HepG2 (cell line): ENCODE measurements at regions of chr16 and their contacts with region 1.

Region 1: GRCh38 chr16:27154705-27155521 is 48.4 kb upstream of the KDM8 start:
- DNase-seq: peak; percentile 52
- ATAC-seq: peak; percentile 89
- H3K4me3 ChIP-seq: peak overlapping the region in 1 of 3 experiments; percentile 45; a peak in 2 of 6 replicates
- H3K27ac ChIP-seq: no peak overlapping the region
- H3K4me1 ChIP-seq: peaks cover 11% of the 10 kb centered on the region
- H3K27me3 ChIP-seq: no peaks in the 10 kb centered on the region; a peak in 1 of 5 replicates
- CTCF ChIP-seq: peak; percentile 95
- EP300 ChIP-seq: no peak
- POLR2A ChIP-seq: no peak
- RAD21 ChIP-seq: peak; percentile 67

Region 2: DNA sequence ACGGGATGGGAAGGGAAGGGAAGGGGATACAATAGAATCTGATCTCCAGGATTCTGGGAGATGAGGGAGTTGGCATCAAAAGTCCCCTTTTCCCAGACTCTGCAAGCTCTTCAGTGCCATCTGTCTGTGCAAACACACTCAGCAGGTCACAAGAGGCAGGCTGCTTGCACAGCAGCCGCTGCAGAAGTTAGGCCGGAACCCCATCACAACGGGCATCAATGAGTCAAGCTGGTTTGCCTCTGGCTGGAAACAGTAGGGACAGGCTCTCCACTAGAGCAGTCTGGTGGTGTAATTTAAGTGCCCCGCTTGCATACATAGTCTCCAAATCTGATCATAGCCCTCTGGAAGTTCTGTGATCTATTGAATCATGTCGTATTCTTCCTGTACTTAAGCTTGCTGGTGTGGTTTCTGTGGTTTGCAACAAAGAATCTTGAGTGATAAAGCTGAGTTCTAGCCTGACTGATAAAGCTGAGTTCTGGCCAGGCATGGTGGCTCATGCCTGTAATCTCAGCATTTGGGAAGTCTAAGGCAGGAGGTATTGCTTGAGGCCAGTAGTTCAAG is 14.7 kb after region 1 on chr16:
- CTCF ChIA-PET with region 1: no interaction called
- POLR2A ChIA-PET with region 1: no interaction called
- in situ Hi-C with region 1: no loop called
- intact Hi-C with region 1: no loop called
- DNase-seq: peak; percentile 53
- ATAC-seq: peak; percentile 93
- H3K4me3 ChIP-seq: no peak overlapping the region
- H3K27ac ChIP-seq: no peak overlapping the region
- H3K4me1 ChIP-seq: no peaks in the 10 kb centered on the region
- H3K27me3 ChIP-seq: peaks cover 0 to 11% of the 10 kb centered on the region in 2 experiments; a peak in 2 of 5 replicates
- CTCF ChIP-seq: peak; percentile 64
- EP300 ChIP-seq: no peak
- POLR2A ChIP-seq: no peak
- RAD21 ChIP-seq: no peak

Region 3: DNA sequence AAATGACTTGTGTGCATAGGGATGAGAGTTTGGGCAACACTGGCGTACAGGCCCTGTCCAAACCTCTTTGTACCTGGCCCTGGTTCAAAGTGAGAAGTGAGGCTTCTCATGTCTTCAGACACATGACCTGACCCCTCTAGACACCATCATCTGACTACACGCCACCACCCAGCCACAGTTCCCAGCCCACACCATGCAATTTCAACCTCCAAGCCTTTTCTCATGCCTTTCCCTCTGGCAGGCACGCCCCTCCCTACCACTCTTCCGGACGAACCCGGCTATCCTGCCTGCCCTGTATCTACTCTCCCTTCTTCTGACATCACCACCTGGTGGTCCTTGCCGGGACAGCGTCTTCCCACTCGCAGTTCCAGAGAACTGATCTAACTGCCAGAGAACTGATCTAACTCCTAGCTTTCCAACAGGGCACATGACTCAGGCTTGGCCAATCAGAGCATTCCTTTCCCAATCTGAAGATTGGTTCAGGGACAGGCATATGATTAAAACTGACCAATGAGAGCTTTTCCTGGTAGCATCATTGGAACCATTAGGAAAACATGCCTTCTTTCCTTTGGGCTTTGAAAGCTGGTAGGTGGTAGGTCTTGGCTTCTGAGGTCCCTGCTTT is 220.0 kb after region 1 on chr16:
- CTCF ChIA-PET with region 1: interaction called, 7 read pairs
- POLR2A ChIA-PET with region 1: no interaction called
- in situ Hi-C with region 1: no loop called
- intact Hi-C with region 1: loop called (anchors 2 kb)
- DNase-seq: peak; percentile 92
- ATAC-seq: peak; percentile 98
- H3K4me3 ChIP-seq: peak overlapping the region in 2 of 3 experiments; percentile 5 to 38; a peak in 1 of 6 replicates
- H3K27ac ChIP-seq: no peak overlapping the region
- H3K4me1 ChIP-seq: peaks cover 18% of the 10 kb centered on the region
- H3K27me3 ChIP-seq: peaks cover under 1 to 7% of the 10 kb centered on the region in 2 experiments; a peak in 2 of 5 replicates
- CTCF ChIP-seq: peak; percentile 94
- EP300 ChIP-seq: no peak
- POLR2A ChIP-seq: peak in 1 of 2 experiments; percentile 44; a peak in 1 of 4 replicates
- RAD21 ChIP-seq: peak; percentile 72

Region 4: DNA sequence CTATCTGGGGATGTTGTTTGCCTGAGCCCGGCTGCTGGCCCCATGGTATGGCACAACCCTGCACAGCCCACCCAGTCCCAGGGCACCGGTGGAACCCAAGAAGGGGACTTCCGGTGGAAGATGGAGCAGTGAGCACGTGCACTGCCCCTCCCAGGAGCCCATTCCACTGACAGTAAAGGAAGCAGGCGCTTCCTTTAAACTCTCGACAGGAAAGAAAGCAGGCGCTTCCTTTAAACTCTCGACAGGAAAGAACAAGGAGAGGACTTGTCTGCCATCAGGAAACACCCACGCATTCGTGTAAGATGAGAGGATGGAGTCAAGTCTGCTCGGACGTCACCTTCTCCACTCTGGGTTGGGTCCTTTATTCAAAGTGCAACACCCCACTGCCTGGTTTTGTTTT is 300.8 kb after region 1 on chr16:
- CTCF ChIA-PET with region 1: interaction called, 10 read pairs
- POLR2A ChIA-PET with region 1: no interaction called
- in situ Hi-C with region 1: no loop called
- intact Hi-C with region 1: no loop called
- DNase-seq: no peak
- ATAC-seq: no peak
- H3K4me3 ChIP-seq: no peak overlapping the region
- H3K27ac ChIP-seq: no peak overlapping the region
- H3K4me1 ChIP-seq: no peaks in the 10 kb centered on the region
- H3K27me3 ChIP-seq: peaks cover 2 to 21% of the 10 kb centered on the region in 2 experiments; a peak in 3 of 5 replicates
- CTCF ChIP-seq: no peak
- EP300 ChIP-seq: no peak
- POLR2A ChIP-seq: no peak
- RAD21 ChIP-seq: no peak